ENCODE measurements at regions of chrX and their contacts with region 1.

Region 1: GRCh38 chrX:100895365-100896075 is 21.4 kb upstream of the NOX1 start:
- DNase-seq: peak; percentile 27 to 52
- H3K4me3 ChIP-seq: no peak overlapping the region
- H3K27ac ChIP-seq: no peak overlapping the region
- H3K4me1 ChIP-seq: peaks cover 10% of the 10 kb centered on the region
- H3K27me3 ChIP-seq: no peaks in the 10 kb centered on the region
- CTCF ChIP-seq: peak; percentile 73

Region 2: GRCh38 chrX:100928660-100929613 is 33.4 kb after region 1 on chrX and contains the start of gene XKRX:
- CTCF ChIA-PET with region 1: no interaction called
- POLR2A ChIA-PET with region 1: interaction called, 4 read pairs
- intact Hi-C with region 1: loop called (anchors 1 kb)
- DNase-seq: peak; percentile 73 to 76
- H3K4me3 ChIP-seq: peak within 1 kb of the TSS; percentile 65
- H3K27ac ChIP-seq: 0 out of 2 replicates have a peak within 1 kb of the TSS, but pooled peaks have one; percentile 5
- H3K4me1 ChIP-seq: peaks cover 29% of the 10 kb centered on the region
- H3K27me3 ChIP-seq: no peaks in the 10 kb centered on the region
- CTCF ChIP-seq: no peak
- total RNA-seq, gene XKRX: 1.2 and 1.4 TPM in 2 replicates

Region 3: DNA sequence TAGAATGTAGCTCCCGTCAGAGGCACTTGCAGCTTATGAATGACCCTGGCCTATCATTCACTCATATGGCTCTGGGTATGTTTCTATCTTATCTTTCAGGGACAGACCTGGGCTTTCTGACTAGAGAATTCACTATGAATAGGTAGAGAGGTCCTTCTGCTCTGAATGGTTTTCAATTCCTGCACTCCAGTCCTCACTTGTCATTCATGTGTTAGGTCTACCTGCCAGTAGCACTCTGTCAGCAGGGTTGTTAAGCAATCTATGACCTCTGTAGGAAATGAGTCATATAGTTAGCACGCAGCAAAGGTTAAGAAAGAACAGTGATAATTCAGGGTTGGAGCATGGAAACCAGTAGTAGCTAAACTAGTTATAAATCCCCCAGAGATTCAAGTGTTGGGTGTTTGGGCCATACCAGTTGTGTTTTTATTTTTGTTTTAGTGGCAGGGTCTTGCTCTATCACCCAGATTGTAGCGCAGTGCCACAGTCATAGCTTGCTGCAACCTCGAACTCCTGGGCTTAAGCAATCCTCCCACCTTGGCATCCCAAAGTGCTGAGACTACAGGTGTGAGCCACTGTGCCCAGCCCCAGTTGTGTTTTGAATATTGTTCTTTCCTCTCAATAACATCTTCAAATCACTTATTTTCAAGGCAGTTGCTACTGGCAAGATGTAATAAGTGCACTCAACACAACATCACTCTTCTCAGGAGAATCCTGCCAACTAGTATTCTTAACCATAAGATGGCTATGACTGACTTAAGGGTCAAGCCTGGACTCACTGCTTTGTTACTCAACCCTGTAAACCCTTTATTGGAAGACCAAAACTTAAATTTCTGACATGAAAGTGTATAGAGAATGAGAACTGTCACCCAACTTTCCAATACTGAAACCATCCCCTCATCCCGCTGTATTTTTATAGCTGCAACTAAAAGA is 99.1 kb after region 1 on chrX:
- CTCF ChIA-PET with region 1: no interaction called
- POLR2A ChIA-PET with region 1: no interaction called
- intact Hi-C with region 1: loop called (anchors 5 kb)
- DNase-seq: peak; percentile 34 to 91
- H3K4me3 ChIP-seq: no peak overlapping the region
- H3K27ac ChIP-seq: peak overlapping the region; percentile 71
- H3K4me1 ChIP-seq: peaks cover 36% of the 10 kb centered on the region
- H3K27me3 ChIP-seq: no peaks in the 10 kb centered on the region
- CTCF ChIP-seq: no peak

Region 4: GRCh38 chrX:101097546-101098453 is 202.3 kb after region 1 on chrX and contains the start of gene CENPI:
- CTCF ChIA-PET with region 1: no interaction called
- POLR2A ChIA-PET with region 1: no interaction called
- intact Hi-C with region 1: loop called (anchors 2 kb)
- DNase-seq: peak; percentile 87 to 96
- H3K4me3 ChIP-seq: peak within 1 kb of the TSS; percentile 59
- H3K27ac ChIP-seq: no peak within 1 kb of the TSS
- H3K4me1 ChIP-seq: peaks cover 4% of the 10 kb centered on the region
- H3K27me3 ChIP-seq: no peaks in the 10 kb centered on the region
- CTCF ChIP-seq: no peak
- total RNA-seq, gene CENPI: 18.0 and 26.1 TPM in 2 replicates

Region 5: GRCh38 chrX:101206471-101206870 is 311.0 kb after region 1 on chrX:
- CTCF ChIA-PET with region 1: no interaction called
- POLR2A ChIA-PET with region 1: no interaction called
- intact Hi-C with region 1: loop called (anchors 5 kb)
- DNase-seq: no peak
- H3K4me3 ChIP-seq: no peak overlapping the region
- H3K27ac ChIP-seq: no peak overlapping the region
- H3K4me1 ChIP-seq: no peaks in the 10 kb centered on the region
- H3K27me3 ChIP-seq: no peaks in the 10 kb centered on the region
- CTCF ChIP-seq: peak; percentile 62

Region 6: GRCh38 chrX:101287402-101287801 is 391.9 kb after region 1 on chrX:
- CTCF ChIA-PET with region 1: no interaction called
- POLR2A ChIA-PET with region 1: no interaction called
- intact Hi-C with region 1: loop called (anchors 5 kb)
- DNase-seq: peak in 1 of 2 experiments; percentile 4
- H3K4me3 ChIP-seq: no peak overlapping the region
- H3K27ac ChIP-seq: no peak overlapping the region
- H3K4me1 ChIP-seq: no peaks in the 10 kb centered on the region
- H3K27me3 ChIP-seq: no peaks in the 10 kb centered on the region
- CTCF ChIP-seq: peak; percentile 68

Measured in PC-9 (cell line).